ENCODE measurements at regions of chr20 and their contacts with region 1.

Region 1: GRCh38 chr20:23606652-23607049 is 934 bp upstream of the CST9 start:
- DNase-seq: peak; percentile 71 to 87 (median 82)
- H3K4me3 ChIP-seq: no peak overlapping the region
- H3K27ac ChIP-seq: no peak overlapping the region
- H3K4me1 ChIP-seq: no peaks in the 10 kb centered on the region
- H3K27me3 ChIP-seq: no peaks in the 10 kb centered on the region
- CTCF ChIP-seq: peak; percentile 64 to 81 (median 68)
- EP300 ChIP-seq: no peak
- POLR2A ChIP-seq: no peak

Region 2: DNA sequence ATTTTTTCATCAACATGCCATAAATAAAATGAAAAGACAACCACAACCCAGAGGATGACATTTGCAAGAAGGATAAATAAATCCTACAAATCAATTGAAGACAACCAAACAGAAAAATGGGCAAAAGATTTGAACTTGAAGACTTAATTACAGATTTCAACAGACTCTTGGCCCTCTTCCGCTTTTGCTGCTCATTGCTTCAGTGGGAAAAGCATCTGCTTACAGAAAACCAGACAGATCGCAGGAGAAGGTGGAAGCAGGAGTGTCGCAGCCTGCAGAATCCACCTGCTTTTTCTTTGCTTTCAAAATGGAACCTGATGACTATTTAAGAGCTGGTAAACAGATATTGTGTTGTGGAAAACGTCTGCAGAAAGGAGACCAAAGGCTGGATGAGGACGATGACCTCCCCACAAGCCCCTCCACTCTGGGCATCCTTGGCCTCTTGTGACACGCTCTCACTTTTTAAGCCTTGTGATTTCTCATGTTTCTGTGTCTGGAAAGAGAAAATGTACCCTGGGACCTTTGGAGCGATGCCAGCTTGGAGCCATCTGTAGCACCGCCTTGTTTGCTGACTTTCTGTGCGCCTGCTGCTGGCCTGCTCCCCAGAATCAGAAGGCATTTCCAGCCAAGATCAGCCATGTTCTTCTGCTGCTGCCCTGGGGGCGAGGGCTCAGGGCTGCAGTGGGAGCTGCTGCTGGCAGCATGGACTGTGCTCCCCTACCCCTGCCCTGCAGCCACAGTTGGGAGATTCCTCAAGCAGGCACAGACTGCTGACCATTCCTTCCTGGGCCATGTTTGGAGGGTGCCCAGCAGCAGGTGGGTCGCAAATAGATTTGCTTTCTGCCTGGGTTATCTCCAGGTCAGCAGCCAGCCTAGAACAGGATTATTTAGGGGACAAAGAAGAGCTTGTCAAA is 170.8 kb before region 1 on chr20:
- intact Hi-C with region 1: loop called in 2 of 4 experiments (anchors 5 to 10 kb)
- DNase-seq: peak in 4 of 5 donors; percentile 52 to 84 (median 73)
- H3K4me3 ChIP-seq: no peak overlapping the region
- H3K27ac ChIP-seq: peak overlapping the region in 1 of 2 donors; percentile 8
- H3K4me1 ChIP-seq: peaks cover 2% of the 10 kb centered on the region
- H3K27me3 ChIP-seq: no peaks in the 10 kb centered on the region
- CTCF ChIP-seq: no peak
- EP300 ChIP-seq: no peak
- POLR2A ChIP-seq: no peak

Region 3: DNA sequence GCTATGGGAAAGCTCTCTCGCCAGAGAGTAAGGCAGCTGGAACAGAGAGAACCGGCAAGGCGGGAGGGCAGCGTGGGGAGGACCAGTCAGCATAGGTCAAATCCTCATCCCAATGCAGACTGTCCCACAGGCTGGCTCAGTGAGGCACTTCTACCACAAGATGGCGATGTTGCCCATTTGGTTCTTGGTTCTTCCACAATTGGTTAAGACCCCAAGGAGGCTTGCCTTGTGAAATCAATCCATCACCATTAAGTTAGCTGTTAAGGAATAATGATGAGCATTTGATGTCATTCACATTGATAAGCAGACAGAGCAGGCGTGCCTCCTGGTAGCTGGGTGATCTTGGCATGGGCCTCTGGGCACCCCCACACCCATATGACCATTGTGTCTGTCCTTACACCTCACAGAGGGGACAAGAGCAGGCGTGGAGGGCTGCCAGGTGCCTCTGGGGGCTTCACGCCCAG is 164.8 kb before region 1 on chr20:
- intact Hi-C with region 1: loop called in 2 of 4 experiments (anchors 5 to 10 kb)
- DNase-seq: peak; percentile 47 to 70 (median 61)
- H3K4me3 ChIP-seq: no peak overlapping the region
- H3K27ac ChIP-seq: no peak overlapping the region
- H3K4me1 ChIP-seq: no peaks in the 10 kb centered on the region
- H3K27me3 ChIP-seq: no peaks in the 10 kb centered on the region
- CTCF ChIP-seq: peak; percentile 52 to 61 (median 58)
- EP300 ChIP-seq: no peak
- POLR2A ChIP-seq: no peak

Region 4: GRCh38 chr20:23988561-23988960 is 381.9 kb after region 1 on chr20 and contains the start of gene GGTLC1:
- intact Hi-C with region 1: loop called in 1 of 4 experiments (anchors 10 kb)
- DNase-seq: no peak
- H3K4me3 ChIP-seq: no peak within 1 kb of the TSS
- H3K27ac ChIP-seq: no peak within 1 kb of the TSS
- H3K4me1 ChIP-seq: no peaks in the 10 kb centered on the region
- H3K27me3 ChIP-seq: no peaks in the 10 kb centered on the region
- CTCF ChIP-seq: no peak
- EP300 ChIP-seq: no peak
- POLR2A ChIP-seq: no peak
- total RNA-seq, gene GGTLC1: not detected

Measured in ovary (tissue), 10 donors.